WTC11 (cell line): ENCODE measurements at regions of chr19 and their contacts with region 1.

Region 1: DNA sequence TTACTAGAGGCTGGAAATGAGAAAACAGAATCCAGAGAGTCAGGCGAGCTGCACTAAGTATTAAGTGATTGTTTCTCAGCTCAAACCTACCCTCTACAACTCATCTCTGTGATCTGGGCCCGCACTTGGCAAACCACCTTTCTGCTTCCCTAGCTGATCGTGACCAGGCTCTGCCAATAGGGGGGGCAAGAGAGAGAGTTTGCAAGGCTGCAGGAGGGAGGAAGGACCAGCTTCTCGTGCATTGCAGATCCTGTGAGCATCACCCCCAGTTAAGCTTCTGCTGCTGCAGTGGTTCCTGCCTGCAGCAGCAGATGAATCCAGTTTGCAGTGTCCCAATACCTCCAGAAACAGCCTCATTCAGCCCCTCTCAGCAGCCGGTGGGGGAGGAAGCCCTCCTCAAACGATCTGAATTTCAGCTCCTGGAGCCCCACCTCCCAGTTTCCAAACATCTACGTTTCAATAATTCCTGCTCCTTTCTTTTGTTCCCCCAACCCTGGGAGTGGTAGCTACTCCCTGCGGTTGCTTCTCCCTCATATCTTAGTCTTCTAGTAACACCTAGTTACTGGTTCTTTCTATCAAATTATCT is 20.0 kb downstream of the XRCC1 start:
- DNase-seq: peak; percentile 92
- ATAC-seq: peak; percentile 98
- H3K4me3 Mint-ChIP-seq: no peak overlapping the region
- H3K27ac Mint-ChIP-seq: peak overlapping the region; percentile 84
- H3K4me1 Mint-ChIP-seq: peaks cover 7% of the 10 kb centered on the region
- H3K27me3 Mint-ChIP-seq: no peaks in the 10 kb centered on the region
- CTCF ChIP-seq: peak; percentile 64

Region 2: DNA sequence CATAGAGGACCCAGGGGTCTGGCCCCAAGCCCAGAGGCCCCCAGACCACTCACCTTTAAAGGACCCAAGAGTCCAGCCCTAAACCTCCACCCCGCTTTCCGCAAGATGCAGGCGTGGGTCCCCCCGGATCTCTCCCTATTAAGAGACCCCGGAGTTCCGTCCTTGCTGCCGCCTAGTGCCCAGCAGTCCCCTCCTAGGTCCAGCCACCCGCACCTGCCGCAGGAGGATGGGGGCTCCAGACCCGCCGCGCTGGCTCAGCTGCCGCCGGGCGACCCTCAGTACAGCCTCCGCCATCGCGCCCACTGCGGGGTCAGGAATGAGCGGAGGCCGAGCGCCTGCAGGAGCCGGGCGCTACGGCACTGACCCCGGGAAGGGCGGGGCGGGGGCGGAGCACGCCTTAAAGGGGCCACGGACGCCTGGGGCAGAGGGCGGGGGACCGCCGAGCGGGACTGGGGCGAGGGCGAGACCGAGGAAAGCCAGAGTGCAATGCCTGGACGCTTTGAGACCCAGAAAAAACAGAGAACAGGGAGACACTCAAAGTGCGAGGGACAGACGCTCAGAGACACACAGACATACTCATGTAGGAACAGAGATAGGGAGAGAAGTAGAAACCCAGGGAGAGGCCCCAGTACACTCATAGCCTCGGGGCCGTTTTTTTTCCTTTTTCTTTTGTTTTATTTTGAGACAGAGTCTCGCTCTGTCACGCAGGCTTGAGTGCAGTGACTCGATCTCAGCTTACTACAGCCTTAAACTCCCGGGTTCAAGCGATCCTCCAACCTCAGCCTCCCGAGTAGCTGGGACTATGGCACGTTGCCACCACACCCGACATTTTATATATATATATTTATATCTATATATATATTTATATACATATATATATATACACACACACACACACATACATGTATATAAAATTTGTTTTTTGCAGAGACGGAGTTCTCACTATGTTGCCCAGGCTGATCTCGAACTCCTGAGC is 28.1 kb before region 1 on chr19 and contains the start of gene ETHE1:
- CTCF ChIA-PET with region 1: interaction called, 43 read pairs
- POLR2A ChIA-PET with region 1: no interaction called
- DNase-seq: peak; percentile 89
- ATAC-seq: peak; percentile 83
- H3K4me3 Mint-ChIP-seq: peak within 1 kb of the TSS; percentile 84
- H3K27ac Mint-ChIP-seq: no peak within 1 kb of the TSS
- H3K4me1 Mint-ChIP-seq: peaks cover 15% of the 10 kb centered on the region
- H3K27me3 Mint-ChIP-seq: peaks cover 46% of the 10 kb centered on the region
- CTCF ChIP-seq: no peak
- total RNA-seq, gene ETHE1: 19.0 to 23.5 TPM (median 21.2 TPM) in 3 replicates

Region 3: DNA sequence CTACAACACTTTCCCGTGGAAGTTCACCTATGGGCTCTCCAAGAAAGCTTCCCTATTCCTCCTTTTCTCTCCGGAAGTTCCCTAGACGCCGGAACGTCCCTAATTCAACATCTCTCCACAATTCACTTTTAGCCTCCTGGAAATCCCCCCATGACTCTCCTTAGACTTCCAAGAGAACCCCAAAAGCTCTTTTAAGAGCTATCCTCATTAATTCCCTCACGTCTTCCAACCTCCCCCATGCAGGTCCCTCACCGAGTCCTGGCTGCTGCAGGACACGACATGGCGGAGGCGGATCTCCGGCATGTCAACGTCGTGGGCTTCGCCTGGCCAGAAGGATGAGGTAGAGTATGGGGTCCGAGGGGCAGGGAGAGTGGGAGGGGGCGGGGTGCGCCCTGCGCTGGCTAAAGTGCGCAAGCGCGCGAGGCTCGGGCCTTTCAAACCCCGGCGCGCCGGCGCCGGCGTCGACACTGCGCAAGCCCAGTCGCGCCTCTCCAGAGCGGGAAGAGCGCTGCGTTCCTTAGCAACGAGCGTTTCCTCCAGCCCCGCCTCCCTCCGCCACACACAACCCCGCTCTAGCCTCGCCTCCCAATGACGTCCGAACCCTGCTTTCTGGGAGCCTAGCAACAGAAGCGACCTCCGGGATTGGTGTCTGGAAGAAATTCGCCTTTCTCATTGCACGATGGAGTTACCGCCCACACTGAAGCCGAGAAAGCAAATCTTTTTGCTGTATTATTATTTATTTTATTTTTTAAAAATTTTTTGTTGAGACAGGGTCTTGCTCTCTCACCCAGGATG is 20.1 kb after region 1 on chr19 and contains the starts of genes PINLYP and XRCC1:
- CTCF ChIA-PET with region 1: interaction called, 18 read pairs
- POLR2A ChIA-PET with region 1: no interaction called
- DNase-seq: peak; percentile 97
- ATAC-seq: peak; percentile 96
- H3K4me3 Mint-ChIP-seq: peak within 1 kb of the TSS; percentile 96
- H3K27ac Mint-ChIP-seq: peak within 1 kb of the TSS; percentile 91
- H3K4me1 Mint-ChIP-seq: peaks cover 33% of the 10 kb centered on the region
- H3K27me3 Mint-ChIP-seq: no peaks in the 10 kb centered on the region; the same call in none of the 2 replicates
- CTCF ChIP-seq: no peak
- total RNA-seq, gene PINLYP: 6.4 to 11.3 TPM (median 10.6 TPM) in 3 replicates
- total RNA-seq, gene XRCC1: 46.5 to 50.8 TPM (median 48.3 TPM) in 3 replicates

Region 4: GRCh38 chr19:43595999-43596841 is 40.9 kb after region 1 on chr19 and contains the starts of genes IRGQ and ZNF576:
- CTCF ChIA-PET with region 1: interaction called, 130 read pairs
- POLR2A ChIA-PET with region 1: interaction called, 6 read pairs
- DNase-seq: peak; percentile 100
- ATAC-seq: peak; percentile 88
- H3K4me3 Mint-ChIP-seq: peak within 1 kb of the TSS; percentile 99
- H3K27ac Mint-ChIP-seq: peak within 1 kb of the TSS; percentile 99
- H3K4me1 Mint-ChIP-seq: peaks cover 17% of the 10 kb centered on the region
- H3K27me3 Mint-ChIP-seq: no peaks in the 10 kb centered on the region
- CTCF ChIP-seq: no peak
- total RNA-seq, gene IRGQ: 33.6 to 38.1 TPM (median 35.5 TPM) in 3 replicates
- total RNA-seq, gene ZNF576: 15.9 to 18.5 TPM (median 16.5 TPM) in 3 replicates

Region 5: GRCh38 chr19:43662487-43662886 is 107.2 kb after region 1 on chr19:
- CTCF ChIA-PET with region 1: interaction called, 25 read pairs
- POLR2A ChIA-PET with region 1: no interaction called
- DNase-seq: no peak
- ATAC-seq: peak; percentile 79
- H3K4me3 Mint-ChIP-seq: no peak overlapping the region
- H3K27ac Mint-ChIP-seq: no peak overlapping the region; the same call in 1 of the 2 replicates
- H3K4me1 Mint-ChIP-seq: peaks cover 6% of the 10 kb centered on the region
- H3K27me3 Mint-ChIP-seq: peaks cover 8% of the 10 kb centered on the region
- CTCF ChIP-seq: peak; percentile 19; the same call in 1 of the 2 replicates

Region 6: GRCh38 chr19:43687660-43687997 is 132.4 kb after region 1 on chr19:
- CTCF ChIA-PET with region 1: no interaction called
- POLR2A ChIA-PET with region 1: no interaction called
- DNase-seq: no peak
- ATAC-seq: no peak
- H3K4me3 Mint-ChIP-seq: no peak overlapping the region
- H3K27ac Mint-ChIP-seq: no peak overlapping the region
- H3K4me1 Mint-ChIP-seq: peaks cover 10% of the 10 kb centered on the region; the same call in 1 of the 2 replicates
- H3K27me3 Mint-ChIP-seq: peaks cover 5% of the 10 kb centered on the region; the same call in 1 of the 2 replicates
- CTCF ChIP-seq: no peak